Activated naive CD4-positive, alpha-beta T cell treated with anti-CD3 and anti-CD28 coated beads for 36 hours (primary cell): ENCODE measurements at regions of chr1 and their contacts with region 1.

Region 1: DNA sequence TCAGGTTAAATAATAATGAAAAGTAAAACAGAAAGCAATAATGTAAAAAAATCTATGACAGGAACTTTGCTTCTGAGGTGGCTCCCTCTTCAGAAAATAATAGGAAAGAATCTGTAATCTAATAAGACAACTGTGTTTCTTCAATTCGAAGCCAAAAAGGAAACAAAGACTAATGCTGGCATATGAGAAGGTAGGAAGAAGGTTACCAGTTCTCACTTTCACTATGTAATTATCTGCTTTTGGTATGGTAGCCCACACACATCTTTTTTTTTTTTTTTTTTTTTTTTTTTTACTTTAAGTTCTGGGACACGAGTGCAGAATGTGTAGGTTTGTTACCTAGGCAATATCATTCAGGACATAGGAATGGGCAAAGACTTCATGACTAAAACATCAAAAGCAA is 47.1 kb downstream of the COP1 start:
- DNase-seq: no peak
- H3K4me3 Mint-ChIP-seq: peak overlapping the region; percentile 27
- H3K27ac Mint-ChIP-seq: peak overlapping the region; percentile 82
- H3K4me1 Mint-ChIP-seq: peaks cover 43% of the 10 kb centered on the region
- H3K27me3 Mint-ChIP-seq: no peaks in the 10 kb centered on the region

Region 2: GRCh38 chr1:176043537-176043936 is 116.5 kb before region 1 on chr1:
- CTCF ChIA-PET with region 1: no interaction called
- intact Hi-C with region 1: no loop called
- DNase-seq: no peak
- H3K4me3 Mint-ChIP-seq: no peak overlapping the region
- H3K27ac Mint-ChIP-seq: no peak overlapping the region
- H3K4me1 Mint-ChIP-seq: peaks cover 6% of the 10 kb centered on the region
- H3K27me3 Mint-ChIP-seq: no peaks in the 10 kb centered on the region

Region 3: DNA sequence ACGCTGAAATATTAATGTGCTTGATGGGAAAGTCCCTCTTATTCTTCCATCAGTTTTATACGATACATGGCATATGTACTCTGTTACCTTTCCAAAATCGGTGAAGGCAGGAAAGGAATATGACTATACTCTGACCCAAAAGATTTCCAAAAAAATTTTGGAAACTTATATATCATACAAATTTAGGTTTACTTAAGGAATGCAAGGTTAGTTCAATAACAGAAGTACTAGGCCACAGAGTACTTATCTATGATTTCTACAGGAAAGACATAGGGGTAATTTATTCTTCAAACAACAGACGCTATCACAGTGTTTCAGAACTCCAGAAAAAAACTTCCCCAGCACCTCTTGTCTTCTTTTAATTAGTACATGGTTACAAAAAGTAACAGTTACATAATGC is 37.7 kb before region 1 on chr1:
- CTCF ChIA-PET with region 1: interaction called, 4 read pairs
- intact Hi-C with region 1: loop called (anchors 2 kb)
- DNase-seq: no peak
- H3K4me3 Mint-ChIP-seq: no peak overlapping the region
- H3K27ac Mint-ChIP-seq: no peak overlapping the region
- H3K4me1 Mint-ChIP-seq: peaks cover 11% of the 10 kb centered on the region
- H3K27me3 Mint-ChIP-seq: no peaks in the 10 kb centered on the region

Region 4: DNA sequence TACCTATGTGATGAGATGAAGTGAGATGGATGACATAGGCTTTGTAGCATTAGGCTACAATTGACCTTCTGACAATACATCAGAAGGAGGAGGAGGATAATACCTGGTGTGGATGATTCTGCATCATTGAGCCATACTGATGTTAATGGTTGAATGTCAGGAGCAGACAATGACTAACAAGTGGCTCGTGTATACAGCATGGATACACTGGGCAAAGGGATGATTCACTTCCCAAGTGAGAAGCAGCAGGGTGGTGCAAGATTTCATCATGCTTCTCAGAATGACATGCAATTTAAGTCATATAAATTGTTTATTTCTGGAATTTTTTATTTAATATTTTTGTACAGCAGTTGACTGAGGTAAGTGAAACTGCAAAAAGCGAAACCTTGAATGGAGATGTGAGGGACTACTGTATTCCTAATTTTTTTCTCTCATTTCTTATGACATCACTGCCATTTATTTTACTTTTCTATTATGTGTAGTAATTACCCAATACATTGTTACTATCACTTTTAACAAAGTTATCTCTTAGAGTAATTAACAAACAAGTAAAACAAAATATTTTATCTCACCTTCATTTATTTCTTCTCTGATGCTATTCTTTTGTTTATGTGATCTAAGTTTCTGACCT is 81.5 kb after region 1 on chr1:
- CTCF ChIA-PET with region 1: no interaction called
- intact Hi-C with region 1: loop called (anchors 1 kb)
- DNase-seq: peak; percentile 65
- H3K4me3 Mint-ChIP-seq: no peak overlapping the region
- H3K27ac Mint-ChIP-seq: peak overlapping the region; percentile 61
- H3K4me1 Mint-ChIP-seq: peaks cover 10% of the 10 kb centered on the region
- H3K27me3 Mint-ChIP-seq: peaks cover 13% of the 10 kb centered on the region